Left cardiac atrium (tissue), 4 donors: ENCODE measurements at regions of chr12 and their contacts with region 1.

Region 1: DNA sequence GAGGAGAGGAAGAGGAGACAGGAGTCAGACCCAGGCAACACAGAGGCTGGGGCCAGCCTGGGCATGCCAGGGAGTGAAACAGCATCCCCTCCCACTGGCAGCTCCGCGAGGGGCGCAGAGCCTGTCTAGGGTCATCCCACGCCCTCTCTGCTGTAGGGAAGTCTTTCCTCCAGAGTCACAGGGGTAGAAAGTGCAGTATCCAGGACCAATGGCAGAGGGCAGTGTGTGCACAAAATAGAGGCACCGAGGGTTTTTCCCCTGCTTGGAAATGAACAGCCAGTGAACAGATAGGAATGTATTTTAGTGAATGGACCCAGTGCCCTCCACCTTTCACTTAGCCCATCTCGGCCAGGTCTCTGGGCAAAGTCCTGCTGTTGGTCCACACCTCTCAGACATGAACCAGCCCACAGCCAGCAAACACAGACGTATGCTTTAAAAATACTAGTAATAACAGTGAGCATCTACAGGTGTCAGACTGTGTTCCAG is 9.4 kb upstream of the KRT74 start:
- DNase-seq: peak; percentile 41
- ATAC-seq: peak; percentile 83 to 88

Region 2: DNA sequence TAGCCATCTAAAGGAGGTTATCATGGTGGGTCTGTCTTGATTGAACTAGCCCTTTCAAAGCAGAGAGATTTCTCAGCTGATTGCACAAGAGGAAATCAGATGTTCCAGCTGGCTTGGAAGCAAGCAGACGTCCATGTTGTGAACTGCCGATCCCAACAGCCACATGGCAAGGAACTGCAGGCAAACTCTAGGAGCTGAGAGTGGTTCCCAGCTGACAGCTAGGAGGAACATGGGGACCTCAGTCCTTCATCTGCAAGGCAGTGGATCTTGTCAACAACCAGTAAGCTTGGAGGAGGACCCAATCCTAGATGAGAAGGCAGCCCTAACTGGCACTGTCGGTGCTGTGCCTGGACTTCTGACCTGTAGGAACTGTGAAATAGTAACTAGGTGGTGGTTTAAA is 623.8 kb before region 1 on chr12:
- intact Hi-C with region 1: no loop called
- DNase-seq: no peak
- ATAC-seq: peak; percentile 30 to 32

Region 3: DNA sequence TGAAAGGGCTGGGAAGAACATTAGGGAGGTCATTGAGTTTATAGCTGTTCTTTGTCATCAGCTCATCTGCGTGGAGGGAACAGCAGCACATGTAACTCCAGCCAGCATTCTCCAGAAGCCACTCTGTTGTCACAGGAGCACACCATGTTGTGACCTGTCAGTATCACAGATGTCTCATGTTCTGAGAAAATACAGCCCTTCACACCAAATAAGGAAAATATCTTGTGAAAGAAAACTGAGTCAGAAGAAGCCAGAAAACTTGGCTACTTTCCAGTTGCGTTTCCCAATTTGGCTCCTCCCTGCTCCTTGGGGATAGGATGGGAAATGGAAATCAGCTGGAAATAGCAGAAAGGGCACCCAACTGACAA is 166.6 kb before region 1 on chr12:
- intact Hi-C with region 1: no loop called
- DNase-seq: peak; percentile 46
- ATAC-seq: peak; percentile 89

Region 4: GRCh38 chr12:52870351-52871290 is 287.6 kb after region 1 on chr12:
- intact Hi-C with region 1: loop called in 1 of 2 experiments (anchors 2 kb)
- DNase-seq: peak; percentile 60
- ATAC-seq: peak in 1 of 2 donors; percentile 10